ENCODE measurements at regions of chr1 and their contacts with region 1.

Region 1: GRCh38 chr1:78617615-78618026 is 2.6 kb upstream of the IFI44L start:
- DNase-seq: peak; percentile 44
- H3K4me3 Mint-ChIP-seq: no peak overlapping the region
- H3K27ac Mint-ChIP-seq: no peak overlapping the region
- H3K4me1 Mint-ChIP-seq: peaks cover 34% of the 10 kb centered on the region
- H3K27me3 Mint-ChIP-seq: no peaks in the 10 kb centered on the region

Region 2: GRCh38 chr1:78607334-78607927 is 10.2 kb before region 1 on chr1:
- CTCF ChIA-PET with region 1: interaction called, 20 read pairs
- POLR2A ChIA-PET with region 1: no interaction called
- intact Hi-C with region 1: no loop called
- DNase-seq: no peak
- H3K4me3 Mint-ChIP-seq: no peak overlapping the region
- H3K27ac Mint-ChIP-seq: no peak overlapping the region
- H3K4me1 Mint-ChIP-seq: no peaks in the 10 kb centered on the region
- H3K27me3 Mint-ChIP-seq: peaks cover 7% of the 10 kb centered on the region

Region 3: GRCh38 chr1:78649628-78650027 is 32.0 kb after region 1 on chr1 and contains the start of gene IFI44:
- CTCF ChIA-PET with region 1: interaction called, 9 read pairs
- POLR2A ChIA-PET with region 1: interaction called, 4 read pairs
- intact Hi-C with region 1: loop called (anchors 1 kb)
- DNase-seq: peak; percentile 85
- H3K4me3 Mint-ChIP-seq: peak within 1 kb of the TSS; percentile 79
- H3K27ac Mint-ChIP-seq: peak within 1 kb of the TSS; percentile 76
- H3K4me1 Mint-ChIP-seq: peaks cover 57% of the 10 kb centered on the region
- H3K27me3 Mint-ChIP-seq: no peaks in the 10 kb centered on the region
- total RNA-seq, gene IFI44: 56.1 to 60.1 TPM

Region 4: DNA sequence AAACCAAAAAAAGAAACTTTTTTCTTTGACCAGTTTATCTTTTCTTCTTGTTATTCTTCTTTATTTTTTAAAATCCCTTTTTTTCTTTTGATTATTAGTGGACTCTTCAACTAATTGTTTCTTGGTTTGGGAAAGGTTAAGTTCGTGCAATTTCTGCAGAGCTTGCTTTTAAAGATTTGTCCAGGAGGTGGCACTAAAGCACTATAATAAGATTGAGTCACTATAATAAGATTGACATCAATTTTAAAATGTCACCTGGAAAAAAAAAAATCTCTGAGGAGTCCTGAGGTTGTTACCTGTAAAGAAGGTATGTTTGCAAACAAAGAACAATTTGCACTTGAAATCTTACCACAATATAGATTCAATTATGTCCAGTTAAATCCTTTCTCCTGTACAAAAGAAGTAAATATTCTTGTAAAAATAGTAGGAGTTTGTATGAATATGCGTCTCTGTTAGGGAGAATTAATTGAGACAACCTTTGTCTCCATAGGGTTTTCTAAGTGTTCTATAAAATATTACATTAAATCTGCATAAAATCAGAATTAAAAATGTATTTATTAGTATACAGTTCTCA is 222.2 kb after region 1 on chr1:
- CTCF ChIA-PET with region 1: no interaction called
- POLR2A ChIA-PET with region 1: no interaction called
- intact Hi-C with region 1: loop called (anchors 10 kb)
- DNase-seq: no peak
- H3K4me3 Mint-ChIP-seq: no peak overlapping the region
- H3K27ac Mint-ChIP-seq: no peak overlapping the region
- H3K4me1 Mint-ChIP-seq: peaks cover 10% of the 10 kb centered on the region
- H3K27me3 Mint-ChIP-seq: no peaks in the 10 kb centered on the region

Measured in activated CD4-positive, alpha-beta memory T cell treated with anti-CD3 and anti-CD28 coated beads for 36 hours (primary cell).